CD4-positive, alpha-beta T cell (primary cell): ENCODE measurements at regions of chr4 and their contacts with region 1.

Region 1: DNA sequence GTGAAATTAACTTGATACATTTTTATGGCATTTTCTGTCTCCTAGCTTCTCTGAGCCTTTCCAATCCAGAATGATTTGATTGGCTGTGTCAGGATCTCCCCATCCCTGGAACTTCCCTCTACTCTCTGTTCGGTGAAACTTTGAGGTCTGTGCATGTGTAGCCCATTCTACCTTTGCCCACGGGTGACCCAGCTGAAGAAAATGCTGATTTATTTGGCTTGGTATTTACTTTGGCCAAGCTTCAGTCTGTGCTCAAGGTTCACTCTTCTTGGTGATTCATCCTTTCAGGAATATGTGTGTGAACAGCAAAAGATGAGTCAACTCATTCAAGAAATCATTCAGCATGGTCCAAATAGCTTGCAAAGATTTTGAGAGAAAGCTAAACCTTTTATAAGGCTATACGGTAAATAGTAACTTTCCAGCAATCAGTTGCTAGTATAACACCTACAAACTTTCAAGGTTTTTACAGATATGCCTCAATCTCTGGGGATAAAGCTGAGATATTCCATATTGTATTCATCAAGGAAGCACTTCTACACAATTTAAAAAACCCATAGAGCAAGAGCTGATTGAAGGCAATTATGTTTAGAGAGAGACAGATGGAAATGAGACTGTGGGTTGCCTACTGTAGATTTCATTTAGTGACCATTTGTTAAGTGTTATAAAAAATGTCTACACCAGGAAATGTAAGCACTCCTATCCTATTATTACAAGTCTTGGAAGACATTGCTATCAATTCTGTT is 233.9 kb upstream of the CXXC4 start:
- DNase-seq: no peak
- ATAC-seq: no peak
- H3K4me3 ChIP-seq: no peak overlapping the region
- H3K4me3 Mint-ChIP-seq: no peak overlapping the region
- H3K27ac ChIP-seq: no peak overlapping the region
- H3K27ac Mint-ChIP-seq: no peak overlapping the region
- H3K4me1 ChIP-seq: no peaks in the 10 kb centered on the region
- H3K4me1 Mint-ChIP-seq: no peaks in the 10 kb centered on the region
- H3K27me3 ChIP-seq: no peaks in the 10 kb centered on the region
- H3K27me3 Mint-ChIP-seq: no peaks in the 10 kb centered on the region
- CTCF ChIP-seq: no peak

Region 2: DNA sequence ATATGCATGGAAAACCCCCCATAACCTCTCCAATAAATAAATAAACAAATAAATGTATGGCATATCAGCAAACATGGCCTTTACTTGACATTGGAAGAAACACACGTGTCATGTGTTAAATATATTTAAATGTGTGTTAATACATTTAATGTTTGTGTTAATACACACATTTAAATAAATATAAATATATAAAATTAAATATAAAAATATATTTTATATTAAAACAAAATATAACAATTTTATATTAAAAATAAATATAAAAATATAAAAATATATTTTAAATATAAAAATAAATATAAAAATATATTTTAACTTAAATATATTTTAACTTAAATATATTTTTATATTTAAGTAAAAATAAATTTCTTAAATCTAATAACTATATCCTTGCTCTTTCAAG is 46.2 kb before region 1 on chr4:
- CTCF ChIA-PET with region 1: no interaction called
- POLR2A ChIA-PET with region 1: no interaction called
- intact Hi-C with region 1: loop called in 1 of 2 experiments (anchors 2 kb)
- DNase-seq: no peak
- ATAC-seq: no peak
- H3K4me3 ChIP-seq: no peak overlapping the region
- H3K4me3 Mint-ChIP-seq: no peak overlapping the region
- H3K27ac ChIP-seq: no peak overlapping the region
- H3K27ac Mint-ChIP-seq: no peak overlapping the region
- H3K4me1 ChIP-seq: no peaks in the 10 kb centered on the region
- H3K4me1 Mint-ChIP-seq: no peaks in the 10 kb centered on the region
- H3K27me3 ChIP-seq: no peaks in the 10 kb centered on the region
- H3K27me3 Mint-ChIP-seq: no peaks in the 10 kb centered on the region
- CTCF ChIP-seq: no peak

Region 3: DNA sequence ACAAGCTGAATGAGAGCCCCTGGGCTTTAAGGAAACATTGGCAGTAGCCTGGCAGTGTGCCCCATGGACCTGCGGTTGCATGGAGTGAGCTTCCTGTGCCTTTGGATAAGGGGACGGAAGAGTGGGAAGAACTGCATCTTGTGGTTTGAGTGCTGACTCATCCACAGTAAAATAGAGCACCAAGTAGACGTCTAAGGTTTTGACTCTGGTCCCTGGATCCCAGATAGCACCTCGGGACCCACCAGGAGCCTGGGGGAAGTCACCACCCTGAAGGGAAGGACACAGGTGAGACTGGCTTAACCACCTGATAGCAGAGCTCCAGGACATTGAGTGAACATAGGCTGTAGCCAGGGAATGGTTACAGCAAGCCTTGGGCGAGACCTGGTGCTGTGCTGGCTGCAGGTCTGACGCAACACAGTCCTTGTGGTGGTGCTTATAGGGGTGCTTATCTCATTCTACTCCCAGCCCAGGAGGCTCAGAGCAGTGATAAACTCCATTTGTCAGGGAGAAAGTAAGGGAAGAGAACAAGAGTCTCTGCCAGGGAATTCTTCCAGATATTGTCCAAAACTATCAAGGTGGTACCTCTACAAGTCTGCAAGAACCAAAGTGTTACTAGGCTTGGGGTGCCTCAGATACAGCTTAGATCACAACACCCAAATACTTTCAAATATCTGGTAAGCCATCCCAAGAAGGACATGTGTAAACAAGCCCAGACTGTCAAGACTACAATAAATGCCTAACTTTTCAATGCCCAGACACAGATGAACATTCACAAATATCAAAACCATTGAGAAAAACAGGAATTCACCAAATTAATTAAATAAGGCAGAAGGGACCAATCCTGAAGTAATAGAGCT is 294.5 kb after region 1 on chr4:
- CTCF ChIA-PET with region 1: no interaction called
- POLR2A ChIA-PET with region 1: no interaction called
- intact Hi-C with region 1: no loop called
- DNase-seq: peak in 2 of 14 experiments; percentile 4 to 10
- ATAC-seq: no peak
- H3K4me3 ChIP-seq: no peak overlapping the region
- H3K4me3 Mint-ChIP-seq: no peak overlapping the region
- H3K27ac ChIP-seq: no peak overlapping the region
- H3K27ac Mint-ChIP-seq: no peak overlapping the region
- H3K4me1 ChIP-seq: no peaks in the 10 kb centered on the region
- H3K4me1 Mint-ChIP-seq: no peaks in the 10 kb centered on the region
- H3K27me3 ChIP-seq: no peaks in the 10 kb centered on the region
- H3K27me3 Mint-ChIP-seq: peaks cover 5% of the 10 kb centered on the region
- CTCF ChIP-seq: no peak